ENCODE measurements at regions of chr12 and their contacts with region 1.

Region 1: GRCh38 chr12:47904713-47905310 is at the start of gene VDR:
- DNase-seq: no peak
- H3K4me3 ChIP-seq: peak within 1 kb of the TSS; percentile 76
- H3K27me3 ChIP-seq: no peaks in the 10 kb centered on the region; the same call in 1 of the 2 replicates
- CTCF ChIP-seq: peak; percentile 41
- polyA plus RNA-seq, gene VDR: 23.3 and 40.5 TPM in 2 replicates

Region 2: DNA sequence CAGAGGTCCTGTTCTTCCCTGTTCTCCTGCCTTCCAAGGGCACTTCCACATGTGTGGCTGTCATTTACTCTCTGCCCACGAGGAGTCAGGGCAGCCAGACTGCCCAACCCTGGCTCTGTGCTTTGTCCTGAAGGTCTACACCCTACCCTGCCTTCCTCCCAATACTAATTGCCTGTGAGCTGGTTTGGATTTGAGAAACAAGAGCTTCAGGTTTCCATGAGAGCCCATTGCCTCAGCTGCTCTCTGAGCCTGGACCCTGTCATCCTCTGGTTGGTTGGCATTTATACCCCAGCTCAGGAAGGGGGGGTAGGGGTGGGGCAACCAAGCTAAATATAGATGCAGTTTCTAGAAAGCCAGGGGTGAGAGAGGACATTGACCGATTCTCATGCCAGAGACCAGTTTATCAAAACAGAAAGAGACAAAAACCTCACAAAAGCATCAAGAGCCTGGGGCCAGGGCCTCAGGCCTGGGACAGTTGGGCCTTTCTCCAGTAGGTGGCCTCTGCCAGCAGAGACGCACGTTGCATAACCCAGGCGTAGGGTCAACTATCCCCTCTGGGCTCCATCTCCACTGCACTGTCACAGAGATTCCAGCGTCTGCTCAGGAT is 34.5 kb before region 1 on chr12:
- CTCF ChIA-PET with region 1: interaction called, 19 read pairs
- POLR2A ChIA-PET with region 1: interaction called, 6 read pairs
- DNase-seq: peak; percentile 26
- H3K4me3 ChIP-seq: no peak overlapping the region
- H3K27me3 ChIP-seq: no peaks in the 10 kb centered on the region
- CTCF ChIP-seq: peak; percentile 71

Region 3: DNA sequence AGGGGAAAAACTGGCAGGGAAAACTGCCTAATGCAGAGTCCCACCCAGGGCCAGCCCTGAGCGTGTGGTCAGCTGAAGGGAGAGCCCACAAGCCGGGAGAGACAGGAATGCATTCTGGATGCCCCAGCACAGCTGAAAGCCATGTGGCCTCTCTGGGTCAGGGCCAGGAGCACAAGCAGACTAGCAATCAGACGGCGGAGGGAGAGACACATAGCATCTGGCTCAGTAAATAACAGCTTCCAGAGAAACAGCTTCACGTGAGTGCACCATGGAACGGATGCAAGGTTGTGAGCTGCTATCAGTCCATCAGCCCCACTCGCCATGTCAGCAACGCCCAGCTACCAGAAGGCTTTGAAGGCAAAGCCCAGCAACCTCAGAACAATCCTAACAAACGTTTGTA is 30.4 kb after region 1 on chr12:
- CTCF ChIA-PET with region 1: interaction called, 12 read pairs
- POLR2A ChIA-PET with region 1: no interaction called
- DNase-seq: peak; percentile 83
- H3K4me3 ChIP-seq: no peak overlapping the region
- H3K27me3 ChIP-seq: peaks cover 6% of the 10 kb centered on the region
- CTCF ChIP-seq: no peak

Region 4: DNA sequence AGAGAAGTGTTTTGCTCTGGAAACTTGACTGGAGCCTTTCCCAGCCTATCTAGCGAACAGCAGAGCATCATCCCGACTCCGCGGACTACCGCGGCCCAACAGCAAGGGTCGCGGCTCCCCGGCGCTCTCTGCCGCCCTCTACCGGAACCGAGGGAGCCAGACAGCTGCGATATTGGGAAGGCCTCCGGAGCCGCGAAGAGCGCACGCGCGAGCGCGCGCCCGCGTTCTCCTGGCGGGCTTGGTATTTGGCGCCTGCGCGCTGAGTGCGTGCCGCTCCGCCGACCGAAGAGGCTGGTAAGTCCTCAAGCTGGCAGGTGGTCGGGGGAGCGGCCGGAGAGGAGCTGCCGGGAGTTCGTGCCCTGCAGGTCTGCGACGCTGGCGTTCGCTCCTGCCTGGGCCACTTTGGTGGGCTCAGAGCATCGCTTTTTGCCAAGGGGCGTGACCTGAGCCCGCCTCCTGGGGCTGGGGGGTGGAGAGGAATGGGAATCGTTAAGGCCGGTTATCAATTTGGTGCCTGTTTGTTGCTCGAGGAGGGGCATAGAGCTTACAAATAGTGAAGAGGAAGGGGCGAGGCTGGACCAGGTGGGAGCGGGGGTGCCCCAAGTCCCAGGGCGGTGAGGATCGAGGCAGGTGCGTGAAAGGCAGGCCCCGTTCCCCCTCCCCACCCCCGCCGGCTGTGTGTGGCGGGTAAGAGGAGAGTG is 58.7 kb after region 1 on chr12 and contains the start of gene TMEM106C:
- CTCF ChIA-PET with region 1: interaction called, 11 read pairs
- POLR2A ChIA-PET with region 1: no interaction called
- DNase-seq: peak; percentile 31
- H3K4me3 ChIP-seq: peak within 1 kb of the TSS; percentile 93
- H3K27me3 ChIP-seq: peaks cover 4% of the 10 kb centered on the region; the same call in 1 of the 2 replicates
- CTCF ChIP-seq: peak; percentile 100
- polyA plus RNA-seq, gene TMEM106C: 188 and 217 TPM in 2 replicates

Region 5: GRCh38 chr12:47990351-47991105 is 85.7 kb after region 1 on chr12:
- CTCF ChIA-PET with region 1: no interaction called
- POLR2A ChIA-PET with region 1: no interaction called
- DNase-seq: no peak
- H3K4me3 ChIP-seq: no peak overlapping the region
- H3K27me3 ChIP-seq: peaks cover 21% of the 10 kb centered on the region
- CTCF ChIP-seq: no peak

Measured in BJ (cell line).